ENCODE measurements at regions of chr1 and their contacts with region 1.

Region 1: DNA sequence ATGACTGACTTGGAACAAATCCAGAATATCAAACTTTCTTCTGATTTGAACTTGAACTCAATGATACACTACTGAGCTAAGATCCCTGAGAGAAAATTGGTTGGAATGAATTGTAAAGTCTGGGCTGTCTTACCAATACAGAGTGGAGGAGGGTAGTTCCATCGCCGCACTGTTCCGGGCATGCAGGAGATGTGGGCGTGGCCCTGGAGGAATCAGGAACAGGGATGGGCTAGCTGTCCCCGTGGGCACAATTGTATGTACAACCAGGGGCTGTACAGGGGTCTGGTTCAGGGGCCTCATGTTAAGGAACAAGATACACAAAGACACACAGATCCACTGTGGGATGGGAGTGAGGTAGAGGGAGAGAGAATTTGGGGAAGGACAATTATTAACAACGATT is 144.3 kb downstream of the ZSCAN20 start:
- DNase-seq: no peak
- ATAC-seq: no peak
- H3K4me3 ChIP-seq: no peak overlapping the region
- H3K27ac ChIP-seq: no peak overlapping the region
- H3K4me1 ChIP-seq: no peaks in the 10 kb centered on the region
- H3K27me3 ChIP-seq: no peaks in the 10 kb centered on the region
- CTCF ChIP-seq: no peak
- POLR2A ChIP-seq: no peak

Region 2: GRCh38 chr1:33472349-33472980 is 144.3 kb before region 1 on chr1 and contains the start of gene ZSCAN20:
- intact Hi-C with region 1: loop called (anchors 10 kb)
- DNase-seq: peak; percentile 97 to 98 (median 98)
- ATAC-seq: peak; percentile 97
- H3K4me3 ChIP-seq: peak within 1 kb of the TSS in 1 of 2 donors; percentile 59
- H3K27ac ChIP-seq: peak within 1 kb of the TSS in 3 of 4 donors; percentile 55 to 70 (median 55)
- H3K4me1 ChIP-seq: peaks cover 23% of the 10 kb centered on the region
- H3K27me3 ChIP-seq: no peaks in the 10 kb centered on the region
- CTCF ChIP-seq: no peak
- POLR2A ChIP-seq: peak in 2 of 3 donors; percentile 51 to 55
- total RNA-seq, gene ZSCAN20: 3.0 to 3.6 TPM

Region 3: GRCh38 chr1:33661811-33662454 is 45.2 kb after region 1 on chr1:
- intact Hi-C with region 1: no loop called
- DNase-seq: no peak
- ATAC-seq: no peak
- H3K4me3 ChIP-seq: no peak overlapping the region
- H3K27ac ChIP-seq: no peak overlapping the region
- H3K4me1 ChIP-seq: no peaks in the 10 kb centered on the region
- H3K27me3 ChIP-seq: peaks cover 0 to 3% of the 10 kb centered on the region in 2 donors
- CTCF ChIP-seq: no peak
- POLR2A ChIP-seq: no peak

Measured in body of pancreas (tissue), 4 donors.